Head of caudate nucleus (tissue), 42 donors: ENCODE measurements at regions of chr15 and their contacts with region 1.

Region 1: DNA sequence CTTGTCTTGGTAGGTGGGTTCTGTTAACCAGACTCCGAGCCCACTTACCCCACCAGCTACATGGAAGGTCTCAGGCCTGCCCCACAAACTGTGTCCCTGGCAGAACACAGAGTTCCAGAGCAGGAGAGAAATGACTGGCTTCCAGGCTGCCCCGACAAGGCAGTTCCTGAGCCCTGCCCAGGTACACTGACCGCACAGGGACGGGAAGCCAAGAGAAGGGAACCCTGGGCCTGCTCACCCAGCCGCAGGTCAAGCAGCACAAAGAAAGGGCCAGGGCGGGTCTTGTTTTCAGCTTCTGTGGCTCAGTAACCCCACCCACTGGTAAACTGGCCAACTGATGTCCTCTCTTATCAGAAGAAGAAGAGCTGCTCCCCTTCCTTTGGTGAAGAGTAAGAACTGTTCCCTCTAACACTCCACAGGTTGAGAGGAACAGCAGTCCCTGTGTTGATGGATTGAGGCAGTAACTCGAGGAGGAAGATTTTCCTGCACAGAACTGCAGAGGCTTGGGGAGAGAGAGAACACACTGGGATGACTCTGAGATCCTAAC is 68.4 kb downstream of the CRTC3 start:
- DNase-seq: peak in 37 of 42 donors; percentile 35 to 87 (median 65)

Region 2: GRCh38 chr15:90529371-90530249 is 68.5 kb before region 1 on chr15 and contains the start of gene CRTC3:
- intact Hi-C with region 1: loop called (anchors 5 kb)
- DNase-seq: peak in 40 of 42 donors; percentile 38 to 80 (median 63)

Region 3: DNA sequence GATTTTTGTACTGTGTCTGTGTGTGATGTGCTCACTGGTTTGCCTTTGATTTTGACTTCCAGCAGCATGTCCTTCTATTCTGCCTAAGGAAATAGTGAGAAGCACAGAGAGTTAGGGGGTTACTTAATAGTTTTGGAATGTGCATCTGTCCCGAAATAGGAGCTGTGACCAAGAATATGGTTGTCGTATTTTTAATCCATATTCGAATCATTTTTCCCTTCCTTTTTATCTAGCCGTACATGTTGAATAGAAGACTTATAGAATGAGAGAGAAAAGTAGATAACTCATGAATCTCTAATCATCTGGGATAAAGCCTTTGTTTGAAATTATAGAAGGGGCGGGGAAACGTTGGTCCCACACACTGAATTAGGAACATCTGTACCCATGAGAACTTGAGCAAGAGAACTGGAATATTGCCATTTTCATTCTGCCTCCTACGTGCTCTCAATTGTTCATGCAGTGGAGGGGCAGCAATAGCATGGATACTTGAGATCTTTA is 44.8 kb before region 1 on chr15:
- intact Hi-C with region 1: loop called (anchors 5 kb)
- DNase-seq: peak in 29 of 42 donors; percentile 36 to 85 (median 59)